ENCODE measurements at regions of chr1 and their contacts with region 1.

Region 1: DNA sequence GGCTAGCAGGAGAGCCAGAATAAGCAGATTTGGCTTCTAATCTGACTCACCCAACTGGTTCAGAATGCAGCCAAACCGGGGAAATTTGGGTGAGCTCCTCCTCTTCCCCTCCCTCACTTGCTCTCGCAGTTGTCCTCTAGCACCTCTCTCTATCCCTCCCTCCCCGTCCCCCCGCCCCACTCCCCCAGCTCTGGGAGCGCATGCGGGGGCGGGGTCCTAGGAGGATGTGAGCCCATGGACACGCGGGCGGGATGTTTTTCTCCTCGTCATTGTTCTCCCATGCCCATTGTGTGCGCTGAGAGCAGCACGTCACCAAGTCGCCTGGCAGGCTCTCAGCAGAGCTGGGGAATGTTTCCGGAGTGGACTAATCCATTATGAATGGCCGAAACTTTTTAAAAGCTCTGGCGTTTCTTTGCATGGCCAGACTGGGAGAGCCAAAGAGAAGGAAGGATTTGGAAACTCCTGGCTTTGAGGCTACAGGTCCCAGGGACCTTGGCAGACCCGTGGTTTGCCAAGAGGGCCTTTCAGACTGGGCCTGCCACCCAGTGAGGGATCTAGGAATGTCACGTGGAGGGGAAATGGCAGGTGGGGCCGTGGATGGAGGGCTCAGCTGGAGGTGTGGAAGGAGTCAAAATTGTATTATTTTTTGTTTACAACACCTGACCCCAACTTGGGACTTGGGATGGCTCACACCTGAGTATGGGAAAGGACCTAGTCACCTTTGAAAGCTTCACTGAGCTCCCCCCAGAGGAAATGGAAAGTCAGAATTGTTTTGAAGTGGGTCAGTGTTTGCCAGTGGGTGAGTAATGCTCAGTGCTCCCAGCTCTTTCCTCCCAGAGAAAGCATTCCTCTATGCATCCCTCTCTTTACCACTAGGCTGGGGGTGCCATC is 39.2 kb downstream of the CDK18 start:
- DNase-seq: peak; percentile 50 to 80
- H3K4me3 ChIP-seq: peak overlapping the region; percentile 12 to 52 (median 28); a peak in 7 of 8 replicates
- H3K27ac ChIP-seq: no peak overlapping the region; the same call in 1 of the 2 replicates
- H3K4me1 ChIP-seq: peaks cover 0 to 14% (median 7%) of the 10 kb centered on the region in 4 experiments; a peak in 5 of 7 replicates
- H3K27me3 ChIP-seq: peaks cover 0 to 26% (median 13%) of the 10 kb centered on the region in 4 experiments; a peak in 6 of 7 replicates
- CTCF ChIP-seq: no peak
- EP300 ChIP-seq: no peak
- POLR2A ChIP-seq: no peak
- RAD21 ChIP-seq: no peak

Region 2: GRCh38 chr1:205584732-205585131 is 41.1 kb after region 1 on chr1:
- CTCF ChIA-PET with region 1: interaction called, 16 read pairs
- POLR2A ChIA-PET with region 1: interaction called, 3 read pairs
- DNase-seq: peak in 1 of 2 experiments; percentile 68
- H3K4me3 ChIP-seq: no peak overlapping the region
- H3K27ac ChIP-seq: no peak overlapping the region
- H3K4me1 ChIP-seq: peaks cover 0 to 5% (median 1%) of the 10 kb centered on the region in 4 experiments; a peak in 5 of 7 replicates
- H3K27me3 ChIP-seq: peaks cover 0 to 2% (median 0%) of the 10 kb centered on the region in 4 experiments; a peak in 2 of 7 replicates
- CTCF ChIP-seq: peak; percentile 33 to 54 (median 47)
- EP300 ChIP-seq: no peak
- POLR2A ChIP-seq: no peak
- RAD21 ChIP-seq: peak; percentile 13 to 46; a peak in 3 of 4 replicates

Region 3: GRCh38 chr1:205598841-205599668 is 55.4 kb after region 1 on chr1:
- CTCF ChIA-PET with region 1: no interaction called
- POLR2A ChIA-PET with region 1: no interaction called
- DNase-seq: no peak
- H3K4me3 ChIP-seq: no peak overlapping the region
- H3K27ac ChIP-seq: no peak overlapping the region
- H3K4me1 ChIP-seq: no peaks in the 10 kb centered on the region
- H3K27me3 ChIP-seq: no peaks in the 10 kb centered on the region
- CTCF ChIP-seq: no peak
- EP300 ChIP-seq: no peak
- POLR2A ChIP-seq: no peak
- RAD21 ChIP-seq: no peak

Measured in H1 (cell line).